Calu3 (cell line): ENCODE measurements at regions of chr17 and their contacts with region 1.

Region 1: GRCh38 chr17:46193626-46194392 is 580 bp upstream of the KANSL1 start:
- DNase-seq: peak; percentile 99
- H3K4me3 Mint-ChIP-seq: peak overlapping the region; percentile 95
- H3K27ac Mint-ChIP-seq: peak overlapping the region; percentile 99
- H3K4me1 Mint-ChIP-seq: peaks cover 50% of the 10 kb centered on the region
- H3K27me3 Mint-ChIP-seq: no peaks in the 10 kb centered on the region
- CTCF ChIP-seq: peak; percentile 54

Region 2: DNA sequence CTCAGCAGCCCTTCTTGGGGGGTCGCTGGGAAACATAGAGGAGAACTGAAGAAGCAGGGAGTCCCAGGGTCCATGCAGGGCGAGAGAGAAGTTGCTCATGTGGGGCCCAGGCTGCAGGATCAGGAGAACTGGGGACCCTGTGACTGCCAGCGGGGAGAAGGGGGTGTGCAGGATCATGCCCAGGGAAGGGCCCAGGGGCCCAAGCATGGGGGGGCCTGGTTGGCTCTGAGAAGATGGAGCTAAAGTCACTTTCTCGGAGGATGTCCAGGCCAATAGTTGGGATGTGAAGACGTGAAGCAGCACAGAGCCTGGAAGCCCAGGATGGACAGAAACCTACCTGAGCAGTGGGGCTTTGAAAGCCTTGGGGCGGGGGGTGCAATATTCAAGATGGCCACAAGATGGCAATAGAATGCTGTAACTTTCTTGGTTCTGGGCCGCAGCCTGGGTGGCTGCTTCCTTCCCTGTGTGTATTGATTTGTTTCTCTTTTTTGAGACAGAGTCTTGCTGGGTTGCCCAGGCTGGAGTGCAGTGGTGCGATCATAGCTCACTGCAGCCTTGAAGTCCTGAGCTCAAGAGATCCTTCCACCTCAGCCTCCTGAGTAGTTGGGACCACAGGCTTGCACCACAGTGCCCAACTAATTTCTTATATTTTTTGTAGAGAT is 191.4 kb before region 1 on chr17:
- CTCF ChIA-PET with region 1: interaction called, 21 read pairs
- intact Hi-C with region 1: loop called (anchors 5 kb)
- DNase-seq: peak; percentile 87
- H3K4me3 Mint-ChIP-seq: no peak overlapping the region
- H3K27ac Mint-ChIP-seq: no peak overlapping the region
- H3K4me1 Mint-ChIP-seq: peaks cover 19% of the 10 kb centered on the region
- H3K27me3 Mint-ChIP-seq: peaks cover 14% of the 10 kb centered on the region
- CTCF ChIP-seq: peak; percentile 99

Region 3: DNA sequence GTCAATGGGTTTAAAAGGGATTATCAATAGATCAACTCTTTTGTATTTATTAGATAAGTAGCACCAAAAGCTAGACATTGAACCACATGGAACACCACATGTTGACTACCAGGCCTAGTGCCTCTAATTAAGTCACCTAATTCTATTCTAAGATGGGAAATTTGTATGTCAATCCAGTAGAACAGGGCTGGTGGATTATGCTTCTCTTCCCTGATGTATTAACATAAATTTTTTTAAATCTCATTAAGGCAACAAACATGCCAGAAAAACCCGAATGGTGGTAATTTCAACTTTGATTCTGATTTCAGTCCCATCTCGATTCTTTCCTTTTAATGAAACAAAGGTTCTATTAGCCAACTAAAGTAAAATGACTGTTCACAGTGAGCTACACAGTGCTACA is 93.2 kb before region 1 on chr17:
- CTCF ChIA-PET with region 1: interaction called, 15 read pairs
- intact Hi-C with region 1: no loop called
- DNase-seq: no peak
- H3K4me3 Mint-ChIP-seq: peak overlapping the region; percentile 19
- H3K27ac Mint-ChIP-seq: peak overlapping the region; percentile 24
- H3K4me1 Mint-ChIP-seq: peaks cover 57% of the 10 kb centered on the region
- H3K27me3 Mint-ChIP-seq: no peaks in the 10 kb centered on the region
- CTCF ChIP-seq: no peak

Region 4: DNA sequence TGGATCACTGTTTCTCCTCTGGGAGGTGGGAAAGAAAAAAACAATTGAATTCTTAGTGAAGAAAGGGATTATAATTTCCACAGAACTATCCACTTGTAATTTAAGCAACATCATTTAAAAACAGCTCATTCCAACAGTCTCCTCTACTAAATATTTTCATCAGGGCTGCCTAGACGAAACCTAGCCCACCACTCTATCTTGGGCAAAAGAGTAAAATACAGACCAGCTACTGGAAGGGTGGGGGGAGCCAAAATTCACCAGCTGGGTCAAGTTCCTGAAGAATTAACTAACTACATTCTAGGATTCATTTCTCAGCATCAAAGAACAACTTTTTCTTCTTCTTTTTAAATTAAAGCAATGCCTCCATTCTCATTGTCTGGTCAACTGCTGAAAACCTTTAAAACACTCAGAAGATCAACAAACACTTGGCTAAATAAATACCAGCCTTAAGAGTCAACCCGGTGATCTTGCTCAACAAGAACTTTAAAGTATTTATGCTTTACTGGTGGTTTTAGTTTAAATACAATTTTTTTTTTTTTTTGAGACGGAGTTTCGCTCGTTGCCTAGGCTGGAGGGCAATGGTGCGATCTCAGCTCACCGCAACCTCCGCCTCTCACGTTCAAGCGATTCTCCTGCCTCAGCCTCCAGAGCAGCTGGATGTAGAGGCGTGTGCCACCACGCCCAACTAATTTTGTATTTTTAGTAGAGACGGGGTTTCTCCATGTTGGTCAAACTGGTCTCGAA is 25.8 kb before region 1 on chr17:
- CTCF ChIA-PET with region 1: interaction called, 14 read pairs
- intact Hi-C with region 1: no loop called
- DNase-seq: no peak
- H3K4me3 Mint-ChIP-seq: no peak overlapping the region
- H3K27ac Mint-ChIP-seq: no peak overlapping the region
- H3K4me1 Mint-ChIP-seq: peaks cover 62% of the 10 kb centered on the region
- H3K27me3 Mint-ChIP-seq: no peaks in the 10 kb centered on the region
- CTCF ChIP-seq: no peak

Region 5: GRCh38 chr17:46205975-46206374 is 12.2 kb after region 1 on chr17:
- CTCF ChIA-PET with region 1: interaction called, 105 read pairs
- intact Hi-C with region 1: no loop called
- DNase-seq: no peak
- H3K4me3 Mint-ChIP-seq: no peak overlapping the region
- H3K27ac Mint-ChIP-seq: no peak overlapping the region
- H3K4me1 Mint-ChIP-seq: peaks cover 29% of the 10 kb centered on the region
- H3K27me3 Mint-ChIP-seq: no peaks in the 10 kb centered on the region
- CTCF ChIP-seq: no peak

Region 6: GRCh38 chr17:46266656-46267544 is 73.1 kb after region 1 on chr17:
- CTCF ChIA-PET with region 1: interaction called, 9 read pairs
- intact Hi-C with region 1: loop called (anchors 5 kb)
- DNase-seq: peak; percentile 91
- H3K4me3 Mint-ChIP-seq: peak overlapping the region; percentile 71
- H3K27ac Mint-ChIP-seq: peak overlapping the region; percentile 41
- H3K4me1 Mint-ChIP-seq: peaks cover 42% of the 10 kb centered on the region
- H3K27me3 Mint-ChIP-seq: peaks cover 32% of the 10 kb centered on the region
- CTCF ChIP-seq: no peak